Activated CD8-positive, alpha-beta T cell treated with anti-CD3 and anti-CD28 coated beads, Interleukin-2, amount 10 ng/mL, durations not matched to agents 7 days and 5 days (primary cell): ENCODE measurements at regions of chr1 and their contacts with region 1.

Region 1: GRCh38 chr1:74689621-74690363 is 16.2 kb upstream of the ERICH3 start:
- DNase-seq: peak; percentile 60
- ATAC-seq: no peak
- H3K4me3 Mint-ChIP-seq: no peak overlapping the region
- H3K27ac Mint-ChIP-seq: no peak overlapping the region
- H3K4me1 Mint-ChIP-seq: no peaks in the 10 kb centered on the region
- H3K27me3 Mint-ChIP-seq: peaks cover 2% of the 10 kb centered on the region

Region 2: DNA sequence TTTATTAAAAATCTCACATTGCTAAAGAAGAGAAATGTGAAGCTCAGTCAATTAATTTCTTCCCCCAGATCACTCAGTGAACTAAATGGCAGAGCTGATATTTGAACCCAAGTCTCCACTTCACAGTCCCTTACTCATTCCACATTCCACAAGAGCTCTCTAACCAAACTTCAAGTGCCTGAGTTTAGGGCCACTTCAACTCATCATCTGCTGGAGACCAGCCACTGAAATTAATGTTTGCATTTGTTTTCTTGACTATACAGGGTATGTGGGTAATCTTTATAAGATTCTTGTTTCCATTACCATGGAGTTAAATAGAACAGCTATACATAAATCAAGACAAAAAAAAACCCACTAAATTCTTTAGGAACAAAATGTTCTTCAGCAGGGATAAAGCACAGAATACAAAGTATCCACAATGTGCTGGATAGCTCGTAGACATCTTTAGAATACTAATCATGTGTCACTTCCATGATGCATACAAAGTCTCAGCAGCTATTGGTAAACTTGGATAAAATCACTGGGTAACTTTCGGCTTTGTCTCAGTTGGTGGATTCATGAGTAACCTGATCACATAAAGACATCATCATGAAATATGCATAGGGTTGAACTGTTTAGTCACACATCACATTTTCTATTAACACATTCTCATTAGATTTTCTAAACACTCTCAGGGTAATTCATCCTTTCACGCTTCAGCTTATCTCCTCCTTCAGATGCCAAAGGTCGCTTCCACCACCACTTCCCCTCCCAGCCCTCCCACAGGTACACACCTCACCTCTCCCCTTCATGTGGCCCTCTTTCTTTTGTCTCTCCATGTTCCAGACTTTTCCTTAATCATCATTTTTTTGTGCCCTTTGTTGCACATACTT is 267.1 kb before region 1 on chr1:
- CTCF ChIA-PET with region 1: no interaction called
- POLR2A ChIA-PET with region 1: no interaction called
- DNase-seq: no peak
- ATAC-seq: no peak
- H3K4me3 Mint-ChIP-seq: no peak overlapping the region
- H3K27ac Mint-ChIP-seq: no peak overlapping the region
- H3K4me1 Mint-ChIP-seq: no peaks in the 10 kb centered on the region
- H3K27me3 Mint-ChIP-seq: no peaks in the 10 kb centered on the region

Region 3: DNA sequence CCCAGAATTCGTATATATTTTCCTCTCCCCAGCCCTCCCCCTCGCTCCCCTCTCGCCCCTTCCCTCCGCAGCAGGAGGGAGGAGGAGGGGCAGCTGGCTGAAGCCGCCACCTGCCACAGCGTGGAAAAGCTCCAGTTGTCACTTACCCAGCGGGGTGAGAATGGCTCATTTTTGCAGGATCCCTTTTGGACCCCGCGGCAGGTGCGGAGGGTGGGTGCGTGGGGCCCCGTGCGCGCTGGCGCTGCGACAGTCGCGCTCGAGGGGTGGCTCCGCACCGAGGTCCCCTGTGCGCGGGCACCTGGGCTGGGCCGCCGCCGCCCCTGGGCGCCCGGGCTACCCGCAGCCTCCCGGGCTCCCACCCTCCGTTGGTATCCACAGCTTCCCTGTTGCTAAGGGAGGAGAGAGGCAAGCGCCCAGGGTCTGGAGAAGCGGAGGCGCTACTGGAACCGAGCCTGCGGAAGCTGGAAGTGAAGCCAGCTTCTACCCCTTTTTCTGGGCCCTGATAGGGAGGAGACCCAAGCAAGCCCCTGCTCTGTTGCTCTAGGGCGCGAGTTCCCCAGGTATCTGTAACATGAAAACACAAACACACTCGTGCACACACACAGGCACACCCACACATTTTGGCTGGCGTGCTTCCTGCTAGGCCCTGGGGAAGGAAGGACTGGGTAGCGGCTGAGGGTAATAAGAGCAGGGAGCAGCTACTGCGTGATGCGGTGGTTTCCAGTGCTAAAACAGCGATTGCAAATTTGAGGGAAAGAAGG is 16.3 kb before region 1 on chr1 and contains the start of gene ERICH3:
- CTCF ChIA-PET with region 1: interaction called, 15 read pairs
- POLR2A ChIA-PET with region 1: no interaction called
- DNase-seq: no peak
- ATAC-seq: no peak
- H3K4me3 Mint-ChIP-seq: no peak within 1 kb of the TSS
- H3K27ac Mint-ChIP-seq: no peak within 1 kb of the TSS
- H3K4me1 Mint-ChIP-seq: no peaks in the 10 kb centered on the region
- H3K27me3 Mint-ChIP-seq: peaks cover 21% of the 10 kb centered on the region
- total RNA-seq, gene ERICH3: not detected

Region 4: DNA sequence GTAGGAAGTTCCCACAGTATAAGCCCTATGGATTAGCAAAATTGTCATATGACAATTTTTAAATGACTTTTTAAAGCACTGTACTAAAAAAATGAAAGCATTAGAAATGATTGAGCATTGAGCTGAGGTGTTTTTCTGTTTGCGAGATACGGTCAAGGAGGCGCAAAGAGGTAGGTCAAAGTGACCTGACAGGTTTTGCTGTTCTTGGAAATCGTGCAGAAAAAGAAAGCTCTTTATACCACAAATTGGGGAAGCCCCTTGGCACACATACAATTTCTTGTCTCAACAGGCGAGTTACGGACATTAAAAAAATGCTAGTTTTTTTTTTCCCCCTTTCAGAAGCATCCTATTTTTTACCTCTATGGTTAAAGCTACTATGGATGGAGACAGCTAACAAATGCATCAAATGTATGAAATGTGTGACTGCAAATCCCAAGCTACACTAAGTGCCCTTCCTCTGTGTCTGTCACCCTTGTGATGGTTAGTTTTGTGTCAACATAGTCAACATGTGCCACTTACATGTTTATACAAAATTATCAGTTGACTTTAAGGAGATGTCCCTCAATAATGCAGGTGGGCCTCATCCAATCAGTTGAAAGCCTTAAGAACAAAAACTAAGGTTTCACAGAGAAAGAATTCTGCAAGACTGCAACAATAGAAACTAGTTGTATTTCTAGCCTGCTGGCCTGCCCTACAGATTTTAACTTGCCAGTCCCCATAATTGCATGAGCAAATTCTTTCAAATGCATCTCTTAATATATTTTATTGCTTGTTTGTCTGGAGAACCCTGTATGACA is 13.8 kb after region 1 on chr1:
- CTCF ChIA-PET with region 1: interaction called, 12 read pairs
- POLR2A ChIA-PET with region 1: no interaction called
- DNase-seq: no peak
- ATAC-seq: no peak
- H3K4me3 Mint-ChIP-seq: no peak overlapping the region
- H3K27ac Mint-ChIP-seq: no peak overlapping the region
- H3K4me1 Mint-ChIP-seq: peaks cover 4% of the 10 kb centered on the region
- H3K27me3 Mint-ChIP-seq: no peaks in the 10 kb centered on the region

Region 5: GRCh38 chr1:74733604-74734484 is 44.1 kb after region 1 on chr1:
- CTCF ChIA-PET with region 1: interaction called, 14 read pairs
- POLR2A ChIA-PET with region 1: no interaction called
- DNase-seq: peak; percentile 65
- ATAC-seq: peak; percentile 64
- H3K4me3 Mint-ChIP-seq: peak overlapping the region; percentile 91
- H3K27ac Mint-ChIP-seq: peak overlapping the region; percentile 99
- H3K4me1 Mint-ChIP-seq: peaks cover 25% of the 10 kb centered on the region
- H3K27me3 Mint-ChIP-seq: no peaks in the 10 kb centered on the region